Activated T-helper 2 cell treated with anti-CD3 and anti-CD28 coated beads, Interferon-gamma antibody, Interleukin-2, Interleukin-4, amounts not matched to agents 10 μg/mL and 5 μg/mL and 100 μg/mL, durations not matched to agents 14 hours and 24 hours and 36 hours (primary cell): ENCODE measurements at regions of chr21 and their contacts with region 1.

Region 1: GRCh38 chr21:45378258-45378966 is 26.6 kb upstream of the COL18A1 start:
- DNase-seq: no peak
- H3K4me3 Mint-ChIP-seq: no peak overlapping the region
- H3K27ac Mint-ChIP-seq: no peak overlapping the region
- H3K4me1 Mint-ChIP-seq: no peaks in the 10 kb centered on the region
- H3K27me3 Mint-ChIP-seq: peaks cover 16% of the 10 kb centered on the region

Region 2: GRCh38 chr21:45319461-45320211 is 58.8 kb before region 1 on chr21:
- intact Hi-C with region 1: loop called (anchors 10 kb)
- DNase-seq: no peak
- H3K4me3 Mint-ChIP-seq: no peak overlapping the region
- H3K27ac Mint-ChIP-seq: no peak overlapping the region
- H3K4me1 Mint-ChIP-seq: no peaks in the 10 kb centered on the region
- H3K27me3 Mint-ChIP-seq: peaks cover 5% of the 10 kb centered on the region

Region 3: DNA sequence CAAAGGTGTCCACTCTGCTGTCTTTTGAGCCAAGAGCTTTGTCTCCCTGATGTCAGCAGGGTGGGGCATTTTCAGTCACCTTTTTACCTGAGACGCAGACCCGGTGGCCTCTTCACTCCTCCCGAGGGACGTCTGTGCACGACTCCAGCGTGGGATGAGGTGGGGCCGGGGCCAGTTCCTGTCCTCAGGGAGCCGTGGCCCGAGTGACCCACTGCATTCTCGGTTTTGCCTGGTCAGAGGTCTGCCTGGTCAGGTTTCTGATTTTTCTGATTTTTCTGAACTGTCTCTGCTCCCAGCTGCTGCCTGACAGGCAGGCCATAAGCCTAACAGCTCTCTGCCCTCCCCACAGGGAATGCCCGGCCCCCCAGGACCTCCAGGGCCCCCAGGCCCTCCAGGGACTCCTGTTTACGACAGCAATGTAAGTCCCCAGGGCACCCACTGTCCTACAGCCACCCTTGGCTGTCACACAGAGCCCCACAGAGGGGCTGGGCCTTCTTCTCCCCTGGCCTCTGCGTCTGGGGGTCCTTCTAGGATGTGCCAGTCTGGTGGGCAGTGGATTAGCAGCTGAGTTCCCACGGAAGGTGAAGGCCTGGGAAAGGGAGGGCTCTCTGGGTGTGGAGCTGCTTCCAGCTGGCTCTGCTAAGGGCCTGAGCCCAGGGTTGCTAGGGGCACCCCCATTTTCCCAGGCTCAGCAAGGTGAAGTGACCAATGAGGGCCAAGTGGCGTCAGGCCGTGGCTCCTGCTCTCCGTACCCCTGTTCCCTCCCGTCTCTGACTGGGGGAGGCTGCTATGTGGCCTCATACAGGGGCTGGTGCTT is 117.9 kb after region 1 on chr21:
- intact Hi-C with region 1: no loop called
- DNase-seq: no peak
- H3K4me3 Mint-ChIP-seq: no peak overlapping the region
- H3K27ac Mint-ChIP-seq: no peak overlapping the region
- H3K4me1 Mint-ChIP-seq: no peaks in the 10 kb centered on the region
- H3K27me3 Mint-ChIP-seq: no peaks in the 10 kb centered on the region